CD8-positive, alpha-beta T cell (primary cell): ENCODE measurements at regions of chr2 and their contacts with region 1.

Region 1: DNA sequence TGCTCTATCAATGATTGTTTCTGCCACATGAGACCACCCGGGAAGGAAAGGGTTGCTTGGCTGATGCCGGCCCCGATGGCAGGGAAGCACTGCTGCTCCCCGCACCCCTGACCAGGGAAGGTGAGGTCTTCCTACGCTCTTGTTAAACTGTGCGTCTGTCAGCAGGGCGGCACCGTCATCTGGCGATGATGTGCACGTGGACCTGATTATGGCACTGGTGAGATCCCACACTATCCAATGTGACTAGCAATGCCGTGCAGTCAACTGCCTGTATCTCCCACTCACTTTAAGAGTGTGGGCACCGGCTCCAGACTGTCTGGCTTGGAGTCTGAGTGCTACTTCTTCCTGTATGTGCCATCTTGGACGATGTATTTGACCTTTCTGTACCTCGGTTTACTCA is 209.2 kb downstream of the MYT1L start:
- DNase-seq: no peak
- ATAC-seq: no peak
- H3K4me3 ChIP-seq: no peak overlapping the region
- H3K4me3 Mint-ChIP-seq: no peak overlapping the region
- H3K27ac ChIP-seq: no peak overlapping the region
- H3K27ac Mint-ChIP-seq: no peak overlapping the region
- H3K4me1 ChIP-seq: no peaks in the 10 kb centered on the region
- H3K4me1 Mint-ChIP-seq: no peaks in the 10 kb centered on the region
- H3K27me3 ChIP-seq: no peaks in the 10 kb centered on the region
- H3K27me3 Mint-ChIP-seq: peaks cover 7% of the 10 kb centered on the region
- CTCF ChIP-seq: no peak

Region 2: GRCh38 chr2:1268034-1268433 is 853.9 kb before region 1 on chr2:
- CTCF ChIA-PET with region 1: no interaction called
- POLR2A ChIA-PET with region 1: no interaction called
- intact Hi-C with region 1: no loop called
- DNase-seq: no peak
- ATAC-seq: no peak
- H3K4me3 ChIP-seq: no peak overlapping the region
- H3K4me3 Mint-ChIP-seq: no peak overlapping the region
- H3K27ac ChIP-seq: no peak overlapping the region
- H3K27ac Mint-ChIP-seq: no peak overlapping the region
- H3K4me1 ChIP-seq: no peaks in the 10 kb centered on the region
- H3K4me1 Mint-ChIP-seq: no peaks in the 10 kb centered on the region
- H3K27me3 ChIP-seq: no peaks in the 10 kb centered on the region
- H3K27me3 Mint-ChIP-seq: peaks cover 2% of the 10 kb centered on the region
- CTCF ChIP-seq: no peak

Region 3: GRCh38 chr2:3461801-3462492 is 1340.1 kb after region 1 on chr2:
- CTCF ChIA-PET with region 1: no interaction called
- POLR2A ChIA-PET with region 1: no interaction called
- intact Hi-C with region 1: loop called in 1 of 2 experiments (anchors 5 kb)
- DNase-seq: peak in 5 of 9 experiments; percentile 13 to 70 (median 43)
- ATAC-seq: peak; percentile 91
- H3K4me3 ChIP-seq: no peak overlapping the region
- H3K4me3 Mint-ChIP-seq: no peak overlapping the region
- H3K27ac ChIP-seq: no peak overlapping the region
- H3K27ac Mint-ChIP-seq: peak overlapping the region; percentile 60
- H3K4me1 ChIP-seq: no peaks in the 10 kb centered on the region
- H3K4me1 Mint-ChIP-seq: peaks cover 6% of the 10 kb centered on the region
- H3K27me3 ChIP-seq: no peaks in the 10 kb centered on the region
- H3K27me3 Mint-ChIP-seq: no peaks in the 10 kb centered on the region
- CTCF ChIP-seq: peak; percentile 98

Region 4: DNA sequence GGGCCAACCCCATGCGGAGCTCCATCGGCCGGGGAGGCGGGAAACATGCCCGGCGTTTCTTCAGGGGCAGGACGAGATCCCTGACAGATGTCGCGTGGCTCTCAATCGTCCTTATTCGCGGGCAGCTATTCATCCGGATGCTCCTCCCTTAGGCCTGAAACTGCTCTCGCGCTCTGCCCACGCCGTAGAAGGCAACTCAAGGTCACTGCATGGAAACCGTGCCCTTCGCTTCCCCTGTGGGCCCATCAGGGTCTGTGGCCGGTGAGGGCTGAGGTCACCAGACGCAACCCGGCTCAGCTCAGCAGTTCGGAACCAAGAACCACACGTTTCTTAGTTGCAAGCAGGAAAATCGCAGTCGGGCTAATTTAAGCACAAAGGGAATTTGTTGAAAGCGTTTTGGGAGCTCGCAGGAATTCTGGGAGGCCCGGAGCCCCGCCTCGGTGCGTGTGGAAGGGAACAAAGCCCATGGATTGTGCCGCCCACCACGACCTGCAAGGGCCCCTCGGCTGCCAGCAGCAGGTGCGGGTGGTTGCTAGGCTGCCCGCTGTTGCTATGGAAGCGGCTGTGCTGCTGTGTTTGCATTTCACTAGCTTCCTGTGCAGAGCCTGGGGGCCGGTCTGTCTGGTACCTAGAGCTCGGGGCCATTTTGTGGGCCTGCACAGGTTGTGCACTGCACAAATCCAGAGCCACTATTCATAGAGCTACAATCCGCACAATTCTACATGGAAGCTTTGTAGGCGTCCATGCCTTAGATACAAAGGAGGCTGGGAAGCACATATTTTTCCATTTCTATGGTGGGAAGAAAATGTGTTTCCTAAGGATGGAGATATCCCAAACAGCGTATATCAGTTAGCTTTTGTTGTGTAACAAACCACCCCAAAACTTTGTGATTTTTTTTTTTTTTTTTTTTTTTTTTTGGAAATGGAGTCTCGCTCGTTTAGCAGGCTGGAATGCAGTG is 1530.1 kb after region 1 on chr2:
- CTCF ChIA-PET with region 1: interaction called, 3 read pairs
- POLR2A ChIA-PET with region 1: no interaction called
- intact Hi-C with region 1: loop called in 1 of 2 experiments (anchors 2 kb)
- DNase-seq: peak; percentile 45 to 80 (median 69)
- ATAC-seq: peak; percentile 61
- H3K4me3 ChIP-seq: peak overlapping the region; percentile 47 to 58
- H3K4me3 Mint-ChIP-seq: peak overlapping the region; percentile 86
- H3K27ac ChIP-seq: peak overlapping the region in 1 of 2 experiments; percentile 68
- H3K27ac Mint-ChIP-seq: peak overlapping the region; percentile 64
- H3K4me1 ChIP-seq: no peaks in the 10 kb centered on the region
- H3K4me1 Mint-ChIP-seq: peaks cover 6% of the 10 kb centered on the region
- H3K27me3 ChIP-seq: no peaks in the 10 kb centered on the region
- H3K27me3 Mint-ChIP-seq: peaks cover 5% of the 10 kb centered on the region
- CTCF ChIP-seq: no peak